ENCODE measurements at regions of chr1 and their contacts with region 1.

Region 1: DNA sequence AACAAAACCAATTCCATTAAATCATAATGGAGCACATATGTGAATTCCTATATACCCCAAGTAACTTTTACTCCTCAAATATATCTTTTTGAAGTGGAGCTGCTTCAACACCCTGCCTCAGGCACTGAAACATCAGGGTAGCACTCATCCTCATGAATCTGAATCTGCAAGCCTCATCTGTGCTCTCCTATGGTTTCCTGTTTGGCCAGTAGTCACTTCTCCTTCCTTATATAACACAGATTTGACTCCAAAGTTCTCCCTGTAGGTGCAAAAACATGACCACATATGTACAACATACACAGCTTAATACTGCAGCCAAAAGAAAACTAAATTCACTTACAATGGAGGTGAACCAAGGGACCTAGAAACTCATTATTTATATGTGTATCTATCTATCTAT is 7.2 kb downstream of the TRIT1 start:
- DNase-seq: no peak
- ATAC-seq: no peak
- H3K4me3 Mint-ChIP-seq: no peak overlapping the region
- H3K27ac Mint-ChIP-seq: no peak overlapping the region
- H3K4me1 Mint-ChIP-seq: peaks cover 40% of the 10 kb centered on the region
- H3K27me3 Mint-ChIP-seq: no peaks in the 10 kb centered on the region

Region 2: DNA sequence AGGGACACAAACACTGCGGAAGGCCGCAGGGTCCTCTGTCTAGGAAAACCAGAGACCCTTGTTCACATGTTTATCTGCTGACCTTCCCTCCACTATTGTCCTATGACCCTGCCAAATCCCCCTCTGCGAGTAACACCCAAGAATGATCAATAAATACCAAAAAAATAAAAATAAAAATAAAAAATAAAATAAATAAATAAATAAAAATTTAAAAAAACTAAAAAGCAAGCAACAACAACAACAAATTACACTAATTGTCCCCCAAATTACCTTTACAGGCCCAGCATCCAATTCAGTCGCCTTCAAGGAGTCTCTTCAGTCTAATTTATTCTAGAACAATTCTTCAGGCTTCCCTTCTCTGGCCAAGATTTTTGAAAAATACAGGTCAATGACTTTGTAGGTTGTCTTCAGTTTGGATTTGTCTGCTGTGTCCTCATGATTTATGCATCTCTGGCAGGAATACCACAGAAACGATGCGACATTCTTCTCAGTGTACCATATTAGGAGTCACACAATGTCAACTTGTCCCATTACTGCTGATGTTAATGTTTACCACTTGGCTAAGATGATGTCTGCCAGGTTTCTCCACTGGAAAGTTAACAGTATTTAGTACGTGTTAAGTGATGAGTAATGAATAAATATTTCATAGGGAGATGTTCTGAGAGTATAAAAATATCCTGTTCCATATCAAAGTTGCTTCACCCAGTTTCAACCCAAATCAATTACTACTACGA is 67.2 kb before region 1 on chr1:
- CTCF ChIA-PET with region 1: no interaction called
- POLR2A ChIA-PET with region 1: no interaction called
- intact Hi-C with region 1: no loop called
- DNase-seq: no peak
- ATAC-seq: no peak
- H3K4me3 Mint-ChIP-seq: no peak overlapping the region
- H3K27ac Mint-ChIP-seq: no peak overlapping the region
- H3K4me1 Mint-ChIP-seq: no peaks in the 10 kb centered on the region
- H3K27me3 Mint-ChIP-seq: no peaks in the 10 kb centered on the region

Region 3: GRCh38 chr1:39863177-39863576 is 13.0 kb before region 1 on chr1:
- CTCF ChIA-PET with region 1: no interaction called
- POLR2A ChIA-PET with region 1: interaction called, 10 read pairs
- intact Hi-C with region 1: no loop called
- DNase-seq: no peak
- ATAC-seq: no peak
- H3K4me3 Mint-ChIP-seq: no peak overlapping the region
- H3K27ac Mint-ChIP-seq: no peak overlapping the region
- H3K4me1 Mint-ChIP-seq: peaks cover 11% of the 10 kb centered on the region
- H3K27me3 Mint-ChIP-seq: no peaks in the 10 kb centered on the region

Measured in activated CD4-positive, alpha-beta T cell treated with anti-CD3 and anti-CD28 coated beads for 36 hours (primary cell).